ENCODE measurements at regions of chr19 and their contacts with region 1.

Region 1: DNA sequence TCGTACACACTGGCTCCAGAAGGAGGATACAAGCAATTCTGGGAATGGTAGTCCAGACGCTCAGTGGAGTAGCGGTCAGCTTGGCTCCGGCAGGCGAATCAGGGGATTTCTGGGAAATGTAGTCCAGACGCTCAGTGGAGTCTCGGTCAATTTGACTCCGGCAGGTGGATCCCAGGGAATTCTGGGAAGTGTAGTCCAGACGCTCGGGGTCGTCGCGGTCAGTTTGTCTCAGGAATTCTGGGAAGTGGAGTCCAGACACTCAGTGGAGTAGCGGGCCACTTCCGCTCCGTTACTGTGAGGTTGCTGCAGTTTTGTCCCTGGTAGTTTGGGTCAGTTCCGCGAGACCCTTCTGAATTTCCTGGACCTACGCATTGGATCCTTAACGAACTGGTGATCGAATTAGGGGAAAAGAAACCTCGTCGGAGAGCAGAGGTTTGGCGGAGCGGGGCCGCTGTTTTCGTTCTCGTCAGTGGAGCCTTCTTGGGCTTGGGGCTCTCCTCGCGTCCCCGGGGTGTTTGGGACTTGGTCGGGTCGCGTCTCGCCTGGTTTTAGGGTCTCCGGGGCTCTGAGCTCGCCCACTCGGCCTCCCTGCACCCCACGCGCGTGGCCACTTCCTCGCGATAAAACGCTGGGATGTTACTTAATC is at the start of gene ZNF225:
- DNase-seq: peak; percentile 87 to 99
- ATAC-seq: peak; percentile 98 to 100 (median 99)
- H3K4me3 ChIP-seq: peak within 1 kb of the TSS; percentile 44 to 85 (median 73)
- H3K27ac ChIP-seq: peak within 1 kb of the TSS in 9 of 10 donors; percentile 37 to 88 (median 84)
- H3K4me1 ChIP-seq: peaks cover 0 to 31% (median 19%) of the 10 kb centered on the region in 9 donors
- H3K27me3 ChIP-seq: no peaks in the 10 kb centered on the region
- CTCF ChIP-seq: peak in 2 of 9 donors; percentile 4 to 24
- total RNA-seq, gene ZNF225: 2.3 to 5.0 (median 3.2) TPM

Region 2: DNA sequence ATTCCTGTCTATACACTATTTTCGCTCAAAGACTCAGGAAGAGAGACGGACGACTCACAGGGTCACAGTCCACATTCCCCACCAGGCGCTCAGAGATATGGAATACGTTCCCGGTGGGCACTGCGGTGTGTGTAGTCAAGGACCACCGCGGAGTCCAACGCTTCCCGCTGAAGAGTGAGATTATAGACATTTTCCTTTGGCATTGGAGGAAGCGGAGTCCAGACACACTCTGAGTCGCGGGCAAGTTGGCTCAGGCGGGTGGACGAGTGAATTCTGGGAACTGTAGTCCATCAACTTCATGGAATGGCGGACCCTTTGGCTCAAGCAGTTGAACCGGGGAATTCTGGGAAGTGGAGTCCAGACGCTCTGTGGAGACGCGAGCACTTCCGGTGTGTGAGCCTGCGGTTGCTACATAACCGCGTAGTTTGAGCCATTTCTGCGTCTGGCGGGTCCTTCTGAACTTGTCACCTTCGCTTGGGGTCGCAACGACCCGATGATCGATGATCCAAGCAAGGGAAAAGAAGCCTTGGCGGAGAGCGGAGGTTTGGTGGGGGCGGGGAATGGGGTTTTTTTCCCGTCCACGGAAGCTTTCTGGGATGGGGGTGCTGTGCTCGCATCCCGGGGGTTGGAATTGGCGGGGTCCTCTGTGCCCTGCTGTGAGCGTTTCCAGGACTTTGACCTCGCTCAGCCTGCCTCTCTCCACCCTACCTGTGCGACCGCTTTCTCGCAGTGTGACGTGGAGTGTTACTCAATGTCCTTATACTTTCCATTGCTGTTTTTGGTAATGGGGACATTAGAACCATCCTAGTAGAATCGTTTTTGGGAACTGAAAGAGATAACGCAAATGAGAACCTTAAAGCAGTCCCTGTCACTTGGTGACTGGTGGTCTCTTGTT is 110.4 kb before region 1 on chr19 and contains the start of gene ZNF230:
- intact Hi-C with region 1: loop called in 2 of 10 experiments (anchors 5 to 10 kb)
- DNase-seq: peak; percentile 81 to 96
- ATAC-seq: peak; percentile 99 to 100 (median 100)
- H3K4me3 ChIP-seq: peak within 1 kb of the TSS; percentile 42 to 94 (median 80)
- H3K27ac ChIP-seq: peak within 1 kb of the TSS in 9 of 10 donors; percentile 64 to 88 (median 78)
- H3K4me1 ChIP-seq: peaks cover 0 to 31% (median 17%) of the 10 kb centered on the region in 9 donors
- H3K27me3 ChIP-seq: no peaks in the 10 kb centered on the region
- CTCF ChIP-seq: no peak
- total RNA-seq, gene ZNF230: 1.6 to 4.3 (median 3.4) TPM

Region 3: DNA sequence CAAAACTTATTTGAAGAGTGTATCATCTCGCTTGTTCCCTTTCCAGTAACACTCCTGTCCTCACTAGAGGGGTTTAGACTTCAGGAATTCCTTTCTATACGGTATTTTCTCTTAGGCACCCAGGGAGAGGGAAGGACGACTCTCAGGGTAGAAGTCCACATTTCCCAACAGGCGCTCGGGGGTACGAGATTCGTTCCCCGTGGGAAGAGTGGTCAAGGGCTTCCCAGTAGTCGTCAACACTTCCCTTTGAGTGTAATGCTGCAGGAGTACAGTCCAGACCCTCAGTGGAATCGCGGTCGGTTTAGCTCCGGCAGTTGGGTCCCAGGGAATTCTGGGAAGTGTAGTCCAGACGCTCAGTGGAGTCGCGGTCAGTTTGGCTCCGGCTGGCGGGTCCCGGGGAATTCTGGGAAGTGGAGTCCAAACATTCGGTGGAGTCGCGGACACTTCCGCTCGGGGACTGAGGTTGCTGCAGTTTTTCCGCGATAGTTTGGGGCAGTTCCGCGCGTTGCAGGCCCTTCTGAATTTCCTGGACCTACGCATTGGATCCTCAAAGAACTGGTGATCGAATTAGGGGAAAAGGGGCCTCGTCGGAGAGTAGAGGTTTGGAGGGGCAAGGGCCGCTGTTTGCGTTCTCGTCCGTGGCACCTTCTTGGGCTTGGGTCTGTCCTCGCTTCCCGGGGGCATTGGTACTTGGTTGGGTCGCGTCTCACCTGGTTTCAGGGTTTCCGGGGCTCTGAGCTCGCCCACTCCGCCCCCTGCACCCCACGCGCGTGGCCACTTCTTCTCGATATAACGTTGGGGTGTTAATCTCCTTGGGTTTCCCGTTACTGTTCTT is 19.1 kb before region 1 on chr19 and contains the start of gene ZNF224:
- intact Hi-C with region 1: loop called in 4 of 10 experiments (anchors 1 to 2 kb)
- DNase-seq: peak; percentile 87 to 95
- ATAC-seq: peak; percentile 98 to 100 (median 99)
- H3K4me3 ChIP-seq: peak within 1 kb of the TSS; percentile 74 to 94 (median 84)
- H3K27ac ChIP-seq: peak within 1 kb of the TSS; percentile 38 to 91 (median 80)
- H3K4me1 ChIP-seq: peaks cover 3 to 21% (median 12%) of the 10 kb centered on the region in 9 donors
- H3K27me3 ChIP-seq: no peaks in the 10 kb centered on the region
- CTCF ChIP-seq: no peak
- total RNA-seq, gene ZNF224: 8.1 to 16.0 (median 13.3) TPM

Region 4: DNA sequence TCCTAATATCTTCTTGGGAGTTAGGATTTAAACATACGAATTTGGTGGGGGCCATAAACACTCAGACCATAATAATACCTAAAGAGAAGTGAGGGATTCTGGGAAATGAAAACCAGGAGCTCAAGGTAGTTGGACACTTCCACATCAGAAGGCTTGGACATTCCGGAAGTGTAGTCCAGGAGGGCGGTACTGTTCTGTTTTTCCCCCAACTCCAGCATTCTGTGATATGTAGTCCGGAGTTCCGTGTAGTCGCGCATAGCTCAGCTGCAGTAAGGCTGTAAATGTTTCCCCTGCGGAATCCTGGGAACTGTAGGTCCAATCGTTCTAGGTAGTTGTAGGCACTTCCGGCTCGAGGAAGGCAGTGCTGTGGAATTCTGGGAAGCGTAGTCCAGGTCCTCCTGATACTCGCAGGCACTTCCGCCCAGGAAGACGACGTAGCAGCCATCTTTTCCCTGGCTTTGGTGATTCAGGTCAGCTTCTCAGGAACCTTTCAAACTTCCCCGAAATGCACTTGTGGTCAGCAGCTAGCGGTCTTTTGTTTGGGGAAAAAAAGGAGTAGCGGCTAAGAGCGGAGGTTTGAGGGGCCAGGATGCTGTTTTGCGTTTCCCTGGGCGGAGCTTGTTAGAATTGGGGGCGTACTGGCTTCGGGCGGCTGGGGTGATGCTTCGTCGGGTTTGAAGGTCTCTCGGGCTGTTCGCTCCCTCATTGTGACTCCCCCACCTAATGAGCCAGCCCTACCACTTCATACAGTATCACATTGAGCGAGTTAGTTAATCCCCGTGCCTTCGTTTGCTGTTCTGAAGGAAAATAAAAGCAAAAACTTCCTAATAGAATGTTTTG is 51.6 kb after region 1 on chr19 and contains the start of gene ZNF226:
- intact Hi-C with region 1: loop called in 5 of 10 experiments (anchors 1 to 10 kb)
- DNase-seq: peak; percentile 76 to 95
- ATAC-seq: peak; percentile 99 to 100 (median 100)
- H3K4me3 ChIP-seq: peak within 1 kb of the TSS; percentile 55 to 86 (median 71)
- H3K27ac ChIP-seq: peak within 1 kb of the TSS; percentile 31 to 92 (median 86)
- H3K4me1 ChIP-seq: peaks cover 0 to 17% (median 12%) of the 10 kb centered on the region in 9 donors
- H3K27me3 ChIP-seq: no peaks in the 10 kb centered on the region
- CTCF ChIP-seq: no peak
- total RNA-seq, gene ZNF226: 17.0 to 30.6 (median 22.6) TPM

Region 5: DNA sequence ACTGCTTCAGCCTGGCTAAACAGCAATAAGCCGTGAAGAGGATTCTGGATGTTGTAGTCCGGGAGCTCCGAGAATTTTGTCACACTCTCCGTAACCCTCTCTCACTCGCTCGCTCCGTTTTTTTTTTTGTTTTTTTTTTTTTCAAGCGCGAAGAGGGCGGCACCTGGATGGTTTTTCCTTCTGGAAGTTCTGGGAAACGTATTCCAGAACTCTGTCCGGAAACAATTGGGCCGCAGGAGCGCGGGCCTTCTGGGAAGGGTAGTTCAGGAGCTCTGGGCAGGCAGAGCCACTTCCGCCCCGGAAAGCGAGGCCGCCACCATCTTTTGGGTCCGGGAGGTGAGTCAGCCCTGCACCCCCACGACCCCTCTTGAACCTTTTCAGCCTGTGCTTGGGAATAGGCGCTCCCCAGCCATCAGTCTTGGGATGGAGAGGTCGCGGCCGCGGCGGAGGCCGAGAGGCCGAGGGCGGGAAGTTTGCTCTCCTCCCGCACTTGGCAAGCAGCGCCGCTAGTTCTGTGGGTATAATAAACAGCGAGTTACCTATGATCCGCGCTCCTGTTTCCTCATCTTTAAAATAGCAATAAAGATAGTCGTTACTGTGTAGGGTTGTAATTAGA is 99.1 kb after region 1 on chr19 and contains the start of gene ZNF227:
- intact Hi-C with region 1: loop called in 2 of 10 experiments (anchors 5 kb)
- DNase-seq: peak; percentile 89 to 93
- ATAC-seq: peak; percentile 97 to 98 (median 98)
- H3K4me3 ChIP-seq: peak within 1 kb of the TSS; percentile 55 to 91 (median 81)
- H3K27ac ChIP-seq: peak within 1 kb of the TSS; percentile 63 to 92 (median 86)
- H3K4me1 ChIP-seq: peaks cover 0 to 33% (median 20%) of the 10 kb centered on the region in 9 donors
- H3K27me3 ChIP-seq: no peaks in the 10 kb centered on the region
- CTCF ChIP-seq: no peak
- total RNA-seq, gene ZNF227: 10.6 to 18.1 (median 12.6) TPM